ENCODE measurements at regions of chr2 and their contacts with region 1.

Region 1: GRCh38 chr2:26244309-26245121 is at the starts of genes HADHA and HADHB:
- DNase-seq: peak; percentile 96
- ATAC-seq: peak; percentile 85
- H3K4me3 ChIP-seq: peak within 1 kb of the TSS; percentile 68 to 100 (median 92)
- H3K4me3 Mint-ChIP-seq: peak within 1 kb of the TSS; percentile 100
- H3K27ac ChIP-seq: peak within 1 kb of the TSS; percentile 93 to 99
- H3K27ac Mint-ChIP-seq: peak within 1 kb of the TSS; percentile 100
- H3K4me1 ChIP-seq: peaks cover 32 to 43% of the 10 kb centered on the region in 2 donors
- H3K4me1 Mint-ChIP-seq: peaks cover 62% of the 10 kb centered on the region
- H3K27me3 ChIP-seq: no peaks in the 10 kb centered on the region
- H3K27me3 Mint-ChIP-seq: no peaks in the 10 kb centered on the region
- CTCF ChIP-seq: no peak
- total RNA-seq, gene HADHA: 96.7 and 104 TPM in 2 replicates
- total RNA-seq, gene HADHB: 64.2 and 70.3 TPM in 2 replicates

Region 2: GRCh38 chr2:25982273-25982967 is 262.1 kb before region 1 on chr2 and contains the start of gene KIF3C:
- CTCF ChIA-PET with region 1: no interaction called
- POLR2A ChIA-PET with region 1: no interaction called
- intact Hi-C with region 1: loop called (anchors 1 kb)
- DNase-seq: peak; percentile 76
- ATAC-seq: peak; percentile 87
- H3K4me3 ChIP-seq: peak within 1 kb of the TSS; percentile 36 to 81 (median 70)
- H3K4me3 Mint-ChIP-seq: peak within 1 kb of the TSS; percentile 88
- H3K27ac ChIP-seq: peak within 1 kb of the TSS in 1 of 2 donors; percentile 53
- H3K27ac Mint-ChIP-seq: peak within 1 kb of the TSS; percentile 61
- H3K4me1 ChIP-seq: peaks cover 6 to 14% of the 10 kb centered on the region in 2 donors
- H3K4me1 Mint-ChIP-seq: peaks cover 8% of the 10 kb centered on the region
- H3K27me3 ChIP-seq: peaks cover 0 to 3% (median 0%) of the 10 kb centered on the region in 4 experiments
- H3K27me3 Mint-ChIP-seq: no peaks in the 10 kb centered on the region
- CTCF ChIP-seq: no peak
- total RNA-seq, gene KIF3C: 4.0 and 6.9 TPM in 2 replicates

Region 3: GRCh38 chr2:26299471-26300101 is 55.1 kb after region 1 on chr2:
- CTCF ChIA-PET with region 1: no interaction called
- POLR2A ChIA-PET with region 1: interaction called, 7 read pairs
- intact Hi-C with region 1: loop called (anchors 1 kb)
- DNase-seq: peak; percentile 59
- ATAC-seq: peak; percentile 42
- H3K4me3 ChIP-seq: peak overlapping the region; percentile 84 to 97 (median 92)
- H3K4me3 Mint-ChIP-seq: no peak overlapping the region
- H3K27ac ChIP-seq: peak overlapping the region; percentile 68 to 91
- H3K27ac Mint-ChIP-seq: no peak overlapping the region
- H3K4me1 ChIP-seq: peaks cover 15 to 20% of the 10 kb centered on the region in 2 donors
- H3K4me1 Mint-ChIP-seq: no peaks in the 10 kb centered on the region
- H3K27me3 ChIP-seq: no peaks in the 10 kb centered on the region
- H3K27me3 Mint-ChIP-seq: no peaks in the 10 kb centered on the region
- CTCF ChIP-seq: no peak

Region 4: GRCh38 chr2:26330113-26330549 is 85.6 kb after region 1 on chr2:
- CTCF ChIA-PET with region 1: interaction called, 8 read pairs
- POLR2A ChIA-PET with region 1: no interaction called
- intact Hi-C with region 1: loop called (anchors 2 kb)
- DNase-seq: peak; percentile 79
- ATAC-seq: peak; percentile 95
- H3K4me3 ChIP-seq: no peak overlapping the region
- H3K4me3 Mint-ChIP-seq: no peak overlapping the region
- H3K27ac ChIP-seq: no peak overlapping the region
- H3K27ac Mint-ChIP-seq: no peak overlapping the region
- H3K4me1 ChIP-seq: peaks cover 2 to 5% of the 10 kb centered on the region in 2 donors
- H3K4me1 Mint-ChIP-seq: peaks cover 6% of the 10 kb centered on the region
- H3K27me3 ChIP-seq: no peaks in the 10 kb centered on the region
- H3K27me3 Mint-ChIP-seq: no peaks in the 10 kb centered on the region
- CTCF ChIP-seq: peak; percentile 97

Region 5: GRCh38 chr2:26720322-26721166 is 476.0 kb after region 1 on chr2:
- CTCF ChIA-PET with region 1: no interaction called
- POLR2A ChIA-PET with region 1: no interaction called
- intact Hi-C with region 1: no loop called
- DNase-seq: no peak
- ATAC-seq: no peak
- H3K4me3 ChIP-seq: no peak overlapping the region
- H3K4me3 Mint-ChIP-seq: no peak overlapping the region
- H3K27ac ChIP-seq: no peak overlapping the region
- H3K27ac Mint-ChIP-seq: no peak overlapping the region
- H3K4me1 ChIP-seq: no peaks in the 10 kb centered on the region
- H3K4me1 Mint-ChIP-seq: no peaks in the 10 kb centered on the region
- H3K27me3 ChIP-seq: peaks cover 0 to 4% (median 0%) of the 10 kb centered on the region in 4 experiments
- H3K27me3 Mint-ChIP-seq: peaks cover 6% of the 10 kb centered on the region
- CTCF ChIP-seq: no peak